ENCODE measurements at regions of chr19 and their contacts with region 1.

Region 1: GRCh38 chr19:54463531-54464043 is at the start of gene LENG9:
- DNase-seq: peak; percentile 100
- H3K4me3 ChIP-seq: peak within 1 kb of the TSS; percentile 77
- H3K27ac ChIP-seq: peak within 1 kb of the TSS; percentile 93
- H3K4me1 ChIP-seq: peaks cover 8% of the 10 kb centered on the region
- H3K27me3 ChIP-seq: no peaks in the 10 kb centered on the region
- total RNA-seq, gene LENG9: 6.6 and 13.5 TPM in 2 replicates

Region 2: DNA sequence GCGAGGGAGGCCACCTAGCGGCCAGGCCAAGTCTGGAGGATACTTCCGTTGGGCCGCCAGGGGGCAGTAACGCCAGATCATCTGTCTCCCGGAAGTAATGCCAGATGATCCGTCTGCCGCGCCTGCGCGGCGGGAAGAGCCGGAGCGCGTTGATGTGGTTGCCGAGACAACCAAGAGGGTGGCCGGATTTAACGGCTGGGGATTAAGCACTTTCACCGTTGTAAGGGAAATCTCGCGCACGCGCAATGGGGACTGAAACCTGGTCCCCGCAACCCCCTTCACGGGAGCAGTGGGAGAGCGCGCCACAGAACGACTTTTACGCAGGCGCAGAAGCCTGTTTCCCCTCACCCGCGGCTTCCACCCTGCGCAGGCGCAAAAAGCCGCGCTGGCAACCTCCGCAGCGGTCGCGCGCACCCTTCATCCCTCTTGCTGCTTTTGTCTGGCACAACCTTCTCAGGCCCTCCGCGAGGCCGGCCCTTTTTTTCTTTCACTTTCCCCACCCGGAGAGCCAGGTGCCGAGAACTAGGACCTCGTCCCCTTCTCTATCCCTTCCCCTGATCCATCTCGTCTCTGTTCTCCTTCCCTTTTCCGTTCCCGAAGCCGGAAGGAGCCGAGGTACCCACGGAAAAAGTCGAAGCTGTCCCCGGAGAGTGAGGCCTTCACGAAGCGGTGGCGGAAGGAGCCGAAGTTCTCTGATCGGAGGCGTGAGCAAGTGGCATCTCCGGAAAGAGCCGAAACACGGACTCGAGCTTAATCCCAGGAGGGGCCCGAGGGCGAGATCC is 1190.4 kb after region 1 on chr19:
- in situ Hi-C with region 1: loop called (anchors 25 kb)
- DNase-seq: peak; percentile 100
- H3K4me3 ChIP-seq: peak overlapping the region; percentile 98
- H3K27ac ChIP-seq: peak overlapping the region; percentile 97
- H3K4me1 ChIP-seq: peaks cover 24% of the 10 kb centered on the region
- H3K27me3 ChIP-seq: no peaks in the 10 kb centered on the region

Measured in GM23248 (cell line).